ENCODE measurements at regions of chr2 and their contacts with region 1.

Region 1: DNA sequence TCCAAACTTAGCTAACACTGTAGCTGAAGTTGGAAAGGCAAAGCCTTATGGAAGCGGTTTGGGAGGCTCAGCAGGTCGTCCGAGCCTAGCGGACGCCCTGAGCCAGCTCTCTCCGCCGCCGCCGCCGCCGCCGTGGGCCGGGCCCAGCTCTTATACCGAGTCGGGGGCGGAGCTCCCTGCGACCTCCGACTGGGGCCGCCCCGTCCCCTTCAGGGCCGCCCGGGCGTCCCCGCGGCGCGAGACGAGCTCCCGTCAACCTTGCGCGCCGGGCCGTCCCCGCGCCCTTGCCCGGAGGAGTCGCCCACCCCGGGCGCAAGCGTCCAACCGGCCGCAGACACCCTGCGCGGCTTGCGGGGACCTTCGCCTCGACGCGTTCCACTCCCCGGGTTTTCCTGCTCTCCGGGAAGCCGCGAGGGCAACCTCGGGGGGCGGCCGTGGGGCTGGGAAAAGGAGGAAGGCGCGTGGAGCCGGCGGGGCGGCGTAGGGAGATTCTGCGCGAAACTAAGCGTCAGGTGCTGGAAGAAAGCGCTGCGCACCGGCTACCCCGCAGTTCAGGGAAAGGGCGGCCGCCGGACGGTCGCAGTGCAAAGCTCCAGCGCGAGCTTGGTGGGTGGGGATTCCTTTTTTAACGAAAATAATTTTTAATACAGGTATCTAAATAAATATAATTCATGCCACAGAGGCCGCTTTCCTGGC is at the start of gene SLC40A1:
- DNase-seq: peak; percentile 82
- ATAC-seq: peak; percentile 97
- H3K4me3 Mint-ChIP-seq: peak within 1 kb of the TSS; percentile 75
- H3K27ac Mint-ChIP-seq: peak within 1 kb of the TSS; percentile 80
- H3K4me1 Mint-ChIP-seq: peaks cover 41% of the 10 kb centered on the region
- H3K27me3 Mint-ChIP-seq: peaks cover 16% of the 10 kb centered on the region
- total RNA-seq, gene SLC40A1: 4.2 TPM

Region 2: GRCh38 chr2:189613077-189613636 is 32.4 kb after region 1 on chr2:
- CTCF ChIA-PET with region 1: no interaction called
- POLR2A ChIA-PET with region 1: interaction called, 11 read pairs
- intact Hi-C with region 1: no loop called
- DNase-seq: no peak
- ATAC-seq: no peak
- H3K4me3 Mint-ChIP-seq: no peak overlapping the region
- H3K27ac Mint-ChIP-seq: no peak overlapping the region
- H3K4me1 Mint-ChIP-seq: no peaks in the 10 kb centered on the region
- H3K27me3 Mint-ChIP-seq: peaks cover 2% of the 10 kb centered on the region

Region 3: DNA sequence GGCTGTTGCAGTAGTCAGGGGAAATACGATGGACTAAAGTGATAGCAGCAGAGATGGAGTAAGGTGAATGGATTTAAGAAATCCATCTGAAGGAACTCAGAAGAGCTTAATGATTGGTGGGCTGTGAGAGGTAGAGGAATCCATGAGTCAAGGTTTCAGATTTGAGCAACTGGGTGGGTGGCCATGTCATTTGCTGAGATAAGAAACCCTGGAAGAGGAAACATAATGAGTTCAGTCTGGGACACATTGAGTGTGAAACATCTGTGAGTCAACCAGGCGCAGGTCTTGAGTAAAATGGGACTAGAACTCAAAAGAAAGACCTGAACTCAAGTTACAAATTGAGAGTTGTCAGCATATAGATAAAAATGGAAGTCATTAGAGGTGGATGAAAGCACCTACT is 60.8 kb after region 1 on chr2:
- CTCF ChIA-PET with region 1: no interaction called
- POLR2A ChIA-PET with region 1: no interaction called
- intact Hi-C with region 1: loop called in 1 of 2 experiments (anchors 1 kb)
- DNase-seq: peak; percentile 74
- ATAC-seq: peak; percentile 97
- H3K4me3 Mint-ChIP-seq: no peak overlapping the region
- H3K27ac Mint-ChIP-seq: peak overlapping the region; percentile 52
- H3K4me1 Mint-ChIP-seq: peaks cover 27% of the 10 kb centered on the region
- H3K27me3 Mint-ChIP-seq: no peaks in the 10 kb centered on the region

Region 4: GRCh38 chr2:189783927-189784867 is 203.4 kb after region 1 on chr2 and contains the starts of genes ORMDL1 and PMS1:
- CTCF ChIA-PET with region 1: no interaction called
- POLR2A ChIA-PET with region 1: no interaction called
- intact Hi-C with region 1: loop called in 1 of 2 experiments (anchors 5 kb)
- DNase-seq: peak; percentile 96
- ATAC-seq: peak; percentile 92
- H3K4me3 Mint-ChIP-seq: peak within 1 kb of the TSS; percentile 74
- H3K27ac Mint-ChIP-seq: peak within 1 kb of the TSS; percentile 94
- H3K4me1 Mint-ChIP-seq: peaks cover 52% of the 10 kb centered on the region
- H3K27me3 Mint-ChIP-seq: no peaks in the 10 kb centered on the region
- total RNA-seq, gene ORMDL1: 45.2 to 49.2 TPM
- total RNA-seq, gene PMS1: 45.8 to 47.4 TPM

Measured in activated CD4-positive, alpha-beta T cell treated with anti-CD3 and anti-CD28 coated beads for 36 hours (primary cell).